ENCODE measurements at regions of chr11 and their contacts with region 1.

Region 1: DNA sequence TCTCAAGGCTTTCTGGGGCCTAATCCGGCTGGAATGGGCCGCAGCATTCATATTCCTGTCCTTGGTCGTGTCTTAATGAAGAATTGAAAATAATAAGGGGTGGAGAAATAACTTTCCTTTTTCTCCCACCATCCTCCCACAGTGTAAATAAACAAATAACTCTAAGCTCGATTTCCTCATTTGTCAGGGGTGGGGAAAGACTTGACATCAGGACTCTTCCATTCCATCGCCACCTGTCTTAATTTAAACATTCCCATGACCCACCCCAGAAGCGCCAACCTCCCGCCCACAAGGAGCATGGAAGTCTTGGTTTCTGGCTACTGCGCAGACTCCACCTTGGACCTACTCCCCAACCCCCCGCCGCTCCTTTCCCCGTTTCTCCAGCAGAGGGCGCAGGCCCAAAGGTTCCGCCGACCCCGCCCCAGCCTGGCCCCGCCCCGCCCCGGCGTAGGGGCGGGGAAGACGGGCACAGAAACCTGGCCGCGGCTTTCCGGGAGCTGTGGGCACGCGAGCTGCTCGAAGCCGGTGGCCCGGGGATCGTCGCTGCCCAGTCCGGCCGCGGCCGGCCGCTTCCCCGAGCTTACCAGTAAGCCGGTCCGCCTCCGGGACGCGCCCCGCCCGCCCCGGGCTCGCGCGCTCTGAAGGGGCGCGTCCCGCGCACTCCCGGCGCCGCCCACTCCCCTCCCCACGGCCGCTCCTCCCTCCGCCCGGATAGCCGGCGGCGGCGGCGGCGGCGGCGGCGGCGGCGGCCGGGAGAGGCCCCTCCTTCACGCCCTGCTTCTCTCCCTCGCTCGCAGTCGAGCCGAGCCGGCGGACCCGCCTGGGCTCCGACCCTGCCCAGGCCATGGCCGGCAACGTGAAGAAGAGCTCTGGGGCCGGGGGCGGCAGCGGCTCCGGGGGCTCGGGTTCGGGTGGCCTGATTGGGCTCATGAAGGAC is at the start of gene CBL:
- DNase-seq: peak; percentile 97
- ATAC-seq: peak; percentile 97 to 98 (median 98)
- H3K4me3 ChIP-seq: peak within 1 kb of the TSS; percentile 85 to 100 (median 94)
- H3K27ac ChIP-seq: peak within 1 kb of the TSS; percentile 85 to 98 (median 97)
- H3K4me1 ChIP-seq: peaks cover 0 to 49% (median 23%) of the 10 kb centered on the region in 9 donors
- H3K27me3 ChIP-seq: no peaks in the 10 kb centered on the region
- CTCF ChIP-seq: peak; percentile 89 to 100 (median 94)
- total RNA-seq, gene CBL: 7.3 to 15.6 (median 8.5) TPM

Region 2: GRCh38 chr11:119134389-119134978 is 71.4 kb before region 1 on chr11:
- intact Hi-C with region 1: no loop called
- DNase-seq: no peak
- ATAC-seq: peak in 2 of 8 donors; percentile 35 to 54
- H3K4me3 ChIP-seq: no peak overlapping the region
- H3K27ac ChIP-seq: no peak overlapping the region
- H3K4me1 ChIP-seq: peaks cover 0 to 19% (median 0%) of the 10 kb centered on the region in 9 donors
- H3K27me3 ChIP-seq: no peaks in the 10 kb centered on the region
- CTCF ChIP-seq: peak in 7 of 9 donors; percentile 34 to 58 (median 36)

Region 3: GRCh38 chr11:119262668-119263351 is 57.0 kb after region 1 on chr11:
- intact Hi-C with region 1: loop called in 3 of 10 experiments (anchors 5 kb)
- DNase-seq: no peak
- ATAC-seq: peak; percentile 41 to 84 (median 70)
- H3K4me3 ChIP-seq: no peak overlapping the region
- H3K27ac ChIP-seq: peak overlapping the region in 9 of 10 donors; percentile 18 to 81 (median 73)
- H3K4me1 ChIP-seq: peaks cover 5 to 94% (median 31%) of the 10 kb centered on the region in 9 donors
- H3K27me3 ChIP-seq: no peaks in the 10 kb centered on the region
- CTCF ChIP-seq: peak in 4 of 9 donors; percentile 20 to 44 (median 27)

Region 4: DNA sequence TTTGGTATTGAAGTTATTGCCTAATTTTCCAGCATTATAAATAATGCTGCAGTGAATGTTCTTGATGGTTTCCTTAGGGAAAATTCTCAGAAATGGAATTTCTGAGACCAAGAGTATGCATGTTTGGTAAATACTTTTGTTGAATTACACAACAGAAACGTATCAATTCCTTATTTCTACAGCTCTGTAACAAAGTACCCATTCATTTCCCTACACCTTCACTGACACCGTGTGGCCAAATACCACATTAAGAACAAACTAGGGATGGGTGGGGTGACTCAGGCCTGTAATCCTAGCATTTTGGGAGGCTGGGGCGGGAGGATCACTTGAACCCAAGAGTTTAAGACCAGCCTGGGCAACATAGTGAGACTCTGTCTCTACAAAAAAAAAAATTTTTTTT is 89.3 kb after region 1 on chr11:
- intact Hi-C with region 1: loop called in 1 of 10 experiments (anchors 10 kb)
- DNase-seq: no peak
- ATAC-seq: no peak
- H3K4me3 ChIP-seq: no peak overlapping the region
- H3K27ac ChIP-seq: no peak overlapping the region
- H3K4me1 ChIP-seq: peaks cover 0 to 32% (median 24%) of the 10 kb centered on the region in 9 donors
- H3K27me3 ChIP-seq: no peaks in the 10 kb centered on the region
- CTCF ChIP-seq: no peak

Region 5: DNA sequence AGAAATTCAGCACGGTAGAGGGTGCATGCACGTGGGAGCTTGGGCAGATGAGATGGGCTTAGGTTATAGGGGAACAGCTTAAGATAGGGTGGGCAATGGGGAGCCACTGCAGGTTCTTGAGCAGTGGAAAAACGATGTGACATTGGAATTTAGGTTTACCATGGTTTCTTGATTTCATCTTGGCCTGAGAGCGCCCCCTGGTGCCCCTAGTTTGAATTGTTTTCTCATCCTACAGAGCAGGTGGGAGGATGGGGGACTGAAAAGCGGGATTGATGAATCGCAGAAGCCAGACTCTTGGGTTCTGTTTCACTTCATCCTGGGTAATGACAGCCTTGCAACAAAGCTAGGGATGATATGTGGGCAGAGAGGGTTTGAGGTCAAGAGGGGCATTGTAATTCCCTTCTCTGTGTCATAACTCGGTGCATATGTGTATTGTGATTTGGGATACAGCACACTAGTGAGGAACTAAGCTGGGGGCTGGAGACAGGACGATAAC is 117.7 kb after region 1 on chr11:
- intact Hi-C with region 1: loop called in 7 of 10 experiments (anchors 2 to 10 kb)
- DNase-seq: peak in 1 of 2 donors; percentile 83
- ATAC-seq: no peak
- H3K4me3 ChIP-seq: no peak overlapping the region
- H3K27ac ChIP-seq: peak overlapping the region in 5 of 10 donors; percentile 6 to 99 (median 92)
- H3K4me1 ChIP-seq: peaks cover 4 to 55% (median 34%) of the 10 kb centered on the region in 9 donors
- H3K27me3 ChIP-seq: peaks cover 0 to 27% (median 0%) of the 10 kb centered on the region in 7 donors
- CTCF ChIP-seq: peak; percentile 68 to 87 (median 84)

Measured in heart right ventricle (tissue), 16 donors.